B cell (primary cell): ENCODE measurements at regions of chr6 and their contacts with region 1.

Region 1: GRCh38 chr6:13272131-13273046 is 55.9 kb downstream of the TBC1D7 start:
- DNase-seq: peak; percentile 91
- ATAC-seq: peak; percentile 76
- H3K4me3 ChIP-seq: peak overlapping the region; percentile 75 to 99 (median 96)
- H3K4me3 Mint-ChIP-seq: peak overlapping the region; percentile 94
- H3K27ac ChIP-seq: peak overlapping the region; percentile 94 to 96
- H3K27ac Mint-ChIP-seq: peak overlapping the region; percentile 93
- H3K4me1 ChIP-seq: peaks cover 59 to 71% of the 10 kb centered on the region in 2 donors
- H3K4me1 Mint-ChIP-seq: peaks cover 72% of the 10 kb centered on the region
- H3K27me3 ChIP-seq: no peaks in the 10 kb centered on the region
- H3K27me3 Mint-ChIP-seq: no peaks in the 10 kb centered on the region
- CTCF ChIP-seq: no peak

Region 2: DNA sequence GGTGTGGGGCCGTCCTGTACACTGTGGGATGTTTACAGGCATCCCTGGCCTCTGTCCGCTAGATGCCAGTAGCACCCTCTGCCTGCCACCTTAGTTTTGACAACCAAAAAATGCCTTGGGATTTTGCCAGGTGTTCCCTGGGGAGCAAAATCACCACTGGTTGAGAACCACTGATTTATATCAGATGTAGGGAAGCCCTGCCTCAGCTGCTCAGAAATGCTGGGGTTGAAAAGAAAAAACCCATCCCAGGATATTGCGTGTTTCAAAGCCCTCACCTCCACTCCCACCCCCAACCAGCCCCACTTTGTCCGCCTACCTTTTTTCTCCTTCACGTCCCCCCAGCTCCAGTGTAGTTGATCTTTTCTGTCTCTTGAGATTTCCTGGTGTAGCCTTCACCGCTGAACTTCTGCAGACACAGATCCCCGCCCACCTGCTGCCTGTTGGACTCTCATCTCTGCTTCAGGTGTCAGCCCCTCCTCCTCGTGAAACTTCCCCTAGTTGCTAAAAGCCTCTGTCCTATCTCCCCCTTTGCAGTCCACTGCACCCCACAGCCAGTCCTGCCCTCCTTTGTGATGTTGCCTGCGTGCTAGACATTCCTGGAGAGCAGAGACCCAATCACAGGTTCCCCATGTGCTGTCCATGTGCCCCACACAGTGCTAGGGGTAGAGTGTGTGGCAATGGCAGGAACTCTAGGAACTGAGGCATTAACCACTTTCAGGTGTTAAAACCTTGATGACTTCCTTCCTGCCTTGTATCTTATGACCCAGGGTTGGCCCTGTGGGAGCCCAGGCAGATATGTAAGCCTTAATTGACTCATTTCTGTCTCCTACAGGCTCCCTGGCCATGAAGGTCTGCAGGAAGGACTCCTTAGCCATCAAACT is 42.9 kb before region 1 on chr6:
- CTCF ChIA-PET with region 1: interaction called, 10 read pairs
- POLR2A ChIA-PET with region 1: no interaction called
- intact Hi-C with region 1: loop called (anchors 2 kb)
- DNase-seq: peak; percentile 69
- ATAC-seq: peak; percentile 77
- H3K4me3 ChIP-seq: no peak overlapping the region
- H3K4me3 Mint-ChIP-seq: peak overlapping the region; percentile 62
- H3K27ac ChIP-seq: no peak overlapping the region
- H3K27ac Mint-ChIP-seq: no peak overlapping the region
- H3K4me1 ChIP-seq: peaks cover 20 to 23% of the 10 kb centered on the region in 2 donors
- H3K4me1 Mint-ChIP-seq: peaks cover 31% of the 10 kb centered on the region
- H3K27me3 ChIP-seq: peaks cover 0 to 30% (median 9%) of the 10 kb centered on the region in 4 experiments
- H3K27me3 Mint-ChIP-seq: peaks cover 16% of the 10 kb centered on the region
- CTCF ChIP-seq: no peak

Region 3: GRCh38 chr6:13286181-13286580 is 13.8 kb after region 1 on chr6:
- CTCF ChIA-PET with region 1: interaction called, 10 read pairs
- POLR2A ChIA-PET with region 1: interaction called, 7 read pairs
- intact Hi-C with region 1: no loop called
- DNase-seq: peak; percentile 61
- ATAC-seq: peak; percentile 74
- H3K4me3 ChIP-seq: no peak overlapping the region
- H3K4me3 Mint-ChIP-seq: peak overlapping the region; percentile 49
- H3K27ac ChIP-seq: peak overlapping the region; percentile 4 to 69
- H3K27ac Mint-ChIP-seq: peak overlapping the region; percentile 75
- H3K4me1 ChIP-seq: peaks cover 31 to 32% of the 10 kb centered on the region in 2 donors
- H3K4me1 Mint-ChIP-seq: peaks cover 74% of the 10 kb centered on the region
- H3K27me3 ChIP-seq: no peaks in the 10 kb centered on the region
- H3K27me3 Mint-ChIP-seq: no peaks in the 10 kb centered on the region
- CTCF ChIP-seq: no peak

Region 4: DNA sequence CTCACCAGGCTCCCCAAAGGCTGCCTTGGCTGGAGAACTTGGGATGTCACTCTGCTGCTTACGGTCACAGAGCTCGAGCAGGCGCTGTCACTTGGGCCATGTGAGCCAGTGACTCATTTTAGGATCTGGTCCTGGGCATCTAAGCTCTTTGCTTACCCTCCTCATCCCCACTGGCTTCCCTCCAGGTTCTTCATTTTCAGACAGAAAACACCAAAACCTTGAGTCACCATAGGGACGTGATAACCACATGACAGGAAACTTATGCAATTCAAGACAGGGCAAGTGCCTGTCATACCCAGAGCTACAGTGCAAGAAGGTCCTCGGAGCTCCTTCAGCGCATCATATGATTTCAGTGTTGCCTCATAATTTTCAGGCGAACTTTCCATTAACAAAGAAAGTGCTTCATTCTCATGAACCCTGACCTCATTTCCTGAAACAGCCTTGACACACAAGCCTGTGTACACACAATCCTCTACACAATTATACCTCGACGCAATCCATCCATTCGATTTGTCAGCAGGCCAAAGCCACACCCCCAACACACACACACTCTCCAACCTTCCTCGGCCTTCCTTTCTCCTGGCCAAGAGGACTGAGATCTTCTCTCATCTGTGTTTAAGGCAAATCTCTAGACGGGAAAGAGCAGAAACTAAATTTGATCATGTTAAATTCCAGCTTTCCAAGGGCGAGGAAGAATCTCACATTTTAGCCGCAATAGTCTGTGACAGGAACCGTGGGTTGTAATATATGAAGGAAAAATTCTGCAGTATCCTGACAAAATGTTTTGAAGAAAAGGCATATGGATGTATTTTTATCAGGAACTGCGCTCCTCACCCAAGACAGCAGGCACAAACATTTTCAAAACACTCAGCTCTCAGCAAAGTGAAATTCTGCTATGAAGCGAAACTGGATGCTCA is 30.6 kb after region 1 on chr6:
- CTCF ChIA-PET with region 1: interaction called, 31 read pairs
- POLR2A ChIA-PET with region 1: interaction called, 4 read pairs
- intact Hi-C with region 1: loop called (anchors 1 kb)
- DNase-seq: peak; percentile 69
- ATAC-seq: peak; percentile 40
- H3K4me3 ChIP-seq: peak overlapping the region in 3 of 5 experiments; percentile 8 to 33 (median 16)
- H3K4me3 Mint-ChIP-seq: peak overlapping the region; percentile 76
- H3K27ac ChIP-seq: peak overlapping the region; percentile 76 to 78
- H3K27ac Mint-ChIP-seq: peak overlapping the region; percentile 89
- H3K4me1 ChIP-seq: peaks cover 41 to 46% of the 10 kb centered on the region in 2 donors
- H3K4me1 Mint-ChIP-seq: peaks cover 76% of the 10 kb centered on the region
- H3K27me3 ChIP-seq: no peaks in the 10 kb centered on the region
- H3K27me3 Mint-ChIP-seq: no peaks in the 10 kb centered on the region
- CTCF ChIP-seq: no peak

Region 5: GRCh38 chr6:13351271-13351670 is 78.9 kb after region 1 on chr6:
- CTCF ChIA-PET with region 1: no interaction called
- POLR2A ChIA-PET with region 1: no interaction called
- intact Hi-C with region 1: no loop called
- DNase-seq: no peak
- ATAC-seq: no peak
- H3K4me3 ChIP-seq: no peak overlapping the region
- H3K4me3 Mint-ChIP-seq: no peak overlapping the region
- H3K27ac ChIP-seq: no peak overlapping the region
- H3K27ac Mint-ChIP-seq: peak overlapping the region; percentile 17
- H3K4me1 ChIP-seq: peaks cover 30 to 38% of the 10 kb centered on the region in 2 donors
- H3K4me1 Mint-ChIP-seq: peaks cover 40% of the 10 kb centered on the region
- H3K27me3 ChIP-seq: no peaks in the 10 kb centered on the region
- H3K27me3 Mint-ChIP-seq: no peaks in the 10 kb centered on the region
- CTCF ChIP-seq: no peak

Region 6: GRCh38 chr6:13419422-13420195 is 147.2 kb after region 1 on chr6:
- CTCF ChIA-PET with region 1: no interaction called
- POLR2A ChIA-PET with region 1: no interaction called
- intact Hi-C with region 1: no loop called
- DNase-seq: peak; percentile 23
- ATAC-seq: peak; percentile 17
- H3K4me3 ChIP-seq: peak overlapping the region in 3 of 5 experiments; percentile 21 to 25 (median 24)
- H3K4me3 Mint-ChIP-seq: peak overlapping the region; percentile 80
- H3K27ac ChIP-seq: no peak overlapping the region
- H3K27ac Mint-ChIP-seq: peak overlapping the region; percentile 22
- H3K4me1 ChIP-seq: peaks cover 13 to 19% of the 10 kb centered on the region in 2 donors
- H3K4me1 Mint-ChIP-seq: peaks cover 36% of the 10 kb centered on the region
- H3K27me3 ChIP-seq: peaks cover 0 to 9% (median 0%) of the 10 kb centered on the region in 4 experiments
- H3K27me3 Mint-ChIP-seq: peaks cover 3% of the 10 kb centered on the region
- CTCF ChIP-seq: no peak

Region 7: DNA sequence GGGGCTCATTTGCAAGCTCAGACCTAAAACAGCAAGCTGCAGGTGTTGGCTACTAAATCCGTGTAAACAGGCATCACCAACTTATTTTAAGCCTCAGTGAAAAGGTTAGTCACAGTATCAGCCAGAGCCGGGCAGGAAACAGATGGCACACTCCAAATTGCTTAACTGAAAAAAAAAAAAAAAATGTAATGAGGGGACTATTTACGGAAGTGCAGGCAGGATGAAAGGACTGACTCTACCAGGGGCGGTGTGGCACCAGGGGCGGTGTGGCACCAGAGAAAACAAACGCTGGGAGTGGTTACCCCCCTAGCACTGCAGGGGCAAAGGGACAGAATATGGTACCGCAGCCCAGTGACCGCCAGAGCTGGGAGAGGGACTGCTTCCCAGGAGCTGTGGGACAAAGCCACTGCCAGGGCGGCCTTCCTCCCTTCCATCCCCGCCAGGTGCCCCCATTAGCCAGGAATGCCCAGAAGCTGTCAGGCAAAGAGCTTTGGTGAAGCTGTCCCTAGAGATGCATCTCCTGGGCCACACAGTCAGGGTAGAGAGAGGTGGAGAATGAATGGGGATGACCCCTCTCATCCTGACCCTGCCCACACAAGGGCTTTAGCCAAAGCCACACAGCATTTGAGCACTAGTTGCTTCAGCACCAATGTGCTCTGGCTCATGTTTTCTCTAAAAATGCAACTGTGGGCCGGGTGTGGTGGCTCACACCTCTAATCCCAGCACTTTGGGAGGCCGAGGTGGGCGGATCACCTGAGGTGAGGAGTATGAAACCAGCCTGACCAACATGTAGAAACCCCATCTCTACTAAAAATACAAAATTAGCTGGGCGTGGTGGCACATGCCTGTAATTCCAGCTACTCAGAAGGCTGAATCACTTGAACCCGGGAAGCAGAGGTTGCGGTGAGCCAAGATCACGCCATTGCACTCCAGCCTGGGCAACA is 254.6 kb after region 1 on chr6:
- CTCF ChIA-PET with region 1: no interaction called
- POLR2A ChIA-PET with region 1: no interaction called
- intact Hi-C with region 1: loop called (anchors 5 kb)
- DNase-seq: peak; percentile 86
- ATAC-seq: peak; percentile 88
- H3K4me3 ChIP-seq: peak overlapping the region in 3 of 5 experiments; percentile 0 to 33 (median 11)
- H3K4me3 Mint-ChIP-seq: peak overlapping the region; percentile 40
- H3K27ac ChIP-seq: peak overlapping the region; percentile 76 to 89
- H3K27ac Mint-ChIP-seq: peak overlapping the region; percentile 88
- H3K4me1 ChIP-seq: peaks cover 38 to 41% of the 10 kb centered on the region in 2 donors
- H3K4me1 Mint-ChIP-seq: peaks cover 47% of the 10 kb centered on the region
- H3K27me3 ChIP-seq: no peaks in the 10 kb centered on the region
- H3K27me3 Mint-ChIP-seq: no peaks in the 10 kb centered on the region
- CTCF ChIP-seq: peak; percentile 33